ENCODE measurements at regions of chr19 and their contacts with region 1.

Region 1: GRCh38 chr19:29529646-29530539 is 4.1 kb downstream of the VSTM2B start:
- DNase-seq: no peak
- H3K4me3 ChIP-seq: no peak overlapping the region
- H3K27ac ChIP-seq: no peak overlapping the region
- H3K4me1 ChIP-seq: peaks cover 4 to 43% (median 28%) of the 10 kb centered on the region in 4 donors
- H3K27me3 ChIP-seq: peaks cover 73% of the 10 kb centered on the region
- CTCF ChIP-seq: no peak
- EP300 ChIP-seq: no peak
- POLR2A ChIP-seq: no peak

Region 2: DNA sequence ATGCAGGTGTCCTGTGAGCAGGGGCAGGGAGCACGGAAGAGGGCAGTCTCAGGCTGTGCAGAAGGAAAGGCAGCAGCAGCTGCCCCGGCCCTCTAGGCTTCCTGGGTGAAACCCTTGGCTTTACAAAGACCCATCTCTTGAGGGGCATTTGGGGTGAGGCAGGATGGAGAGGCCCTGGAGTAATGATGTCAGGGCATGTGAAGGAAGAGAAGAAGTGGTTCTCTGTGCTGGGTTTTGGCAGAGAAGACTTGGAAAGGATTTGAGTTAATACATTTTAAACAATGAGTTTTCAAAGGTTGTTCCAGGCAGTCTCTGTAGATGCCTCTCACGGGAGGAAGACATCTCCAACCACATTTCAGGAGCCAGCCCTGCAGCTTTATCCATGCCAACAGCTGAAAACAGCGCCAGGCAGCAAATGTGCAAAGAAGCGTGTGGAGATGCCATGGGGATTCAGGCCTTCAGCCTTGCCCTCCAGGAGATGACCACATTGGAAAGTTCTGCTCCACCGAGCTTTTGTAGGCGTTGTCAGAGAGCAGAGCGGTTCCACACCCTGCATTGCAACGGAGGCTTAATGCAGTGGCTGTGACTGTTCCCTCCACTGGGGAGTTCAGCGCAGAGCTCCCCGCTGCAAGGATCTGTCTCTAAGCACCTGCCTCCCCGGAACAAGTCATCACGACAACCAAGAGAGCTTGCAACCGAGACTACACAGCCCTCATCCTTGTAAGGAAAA is 639.8 kb before region 1 on chr19:
- in situ Hi-C with region 1: no loop called
- intact Hi-C with region 1: loop called (anchors 5 kb)
- DNase-seq: no peak
- H3K4me3 ChIP-seq: no peak overlapping the region
- H3K27ac ChIP-seq: no peak overlapping the region
- H3K4me1 ChIP-seq: no peaks in the 10 kb centered on the region
- H3K27me3 ChIP-seq: no peaks in the 10 kb centered on the region
- CTCF ChIP-seq: no peak
- EP300 ChIP-seq: no peak
- POLR2A ChIP-seq: no peak

Region 3: GRCh38 chr19:29342721-29343120 is 187.2 kb before region 1 on chr19:
- in situ Hi-C with region 1: no loop called
- intact Hi-C with region 1: no loop called
- DNase-seq: no peak
- H3K4me3 ChIP-seq: no peak overlapping the region
- H3K27ac ChIP-seq: no peak overlapping the region
- H3K4me1 ChIP-seq: no peaks in the 10 kb centered on the region
- H3K27me3 ChIP-seq: no peaks in the 10 kb centered on the region
- CTCF ChIP-seq: no peak
- EP300 ChIP-seq: no peak
- POLR2A ChIP-seq: no peak

Region 4: DNA sequence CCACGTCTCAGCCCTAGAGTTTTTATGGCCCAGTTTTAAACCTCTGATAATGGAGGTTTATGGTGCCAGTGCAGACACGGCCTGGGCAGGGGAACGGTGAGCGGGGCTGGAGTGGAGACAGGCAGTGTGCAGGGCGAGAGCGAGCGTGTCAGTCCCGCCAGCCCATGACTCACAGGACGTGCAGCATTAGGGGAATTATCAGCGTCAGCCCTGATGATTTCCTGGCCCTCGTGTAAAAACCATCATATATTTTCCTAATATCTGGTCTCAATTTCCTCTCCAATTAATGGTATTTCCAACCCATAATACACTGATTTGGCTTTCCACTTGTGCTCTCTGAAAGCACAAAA is 108.7 kb before region 1 on chr19:
- in situ Hi-C with region 1: no loop called
- intact Hi-C with region 1: no loop called
- DNase-seq: no peak
- H3K4me3 ChIP-seq: no peak overlapping the region
- H3K27ac ChIP-seq: no peak overlapping the region
- H3K4me1 ChIP-seq: no peaks in the 10 kb centered on the region
- H3K27me3 ChIP-seq: no peaks in the 10 kb centered on the region
- CTCF ChIP-seq: no peak
- EP300 ChIP-seq: no peak
- POLR2A ChIP-seq: no peak

Measured in transverse colon (tissue), 4 donors.